Activated B cell treated with CpG ODN at 0.5 μM for 24 hours (primary cell): ENCODE measurements at regions of chr2 and their contacts with region 1.

Region 1: GRCh38 chr2:177332041-177332991 is 60.3 kb upstream of the AGPS start:
- DNase-seq: no peak
- ATAC-seq: peak; percentile 94
- H3K4me3 Mint-ChIP-seq: peak overlapping the region; percentile 46
- H3K27ac Mint-ChIP-seq: peak overlapping the region; percentile 50
- H3K4me1 Mint-ChIP-seq: peaks cover 9% of the 10 kb centered on the region
- H3K27me3 Mint-ChIP-seq: no peaks in the 10 kb centered on the region
- CTCF ChIP-seq: no peak

Region 2: GRCh38 chr2:177212106-177212890 is 120.0 kb before region 1 on chr2 and contains the start of gene HNRNPA3:
- CTCF ChIA-PET with region 1: no interaction called
- POLR2A ChIA-PET with region 1: interaction called, 6 read pairs
- intact Hi-C with region 1: loop called (anchors 1 kb)
- DNase-seq: peak; percentile 100
- ATAC-seq: peak; percentile 86
- H3K4me3 Mint-ChIP-seq: peak within 1 kb of the TSS; percentile 95
- H3K27ac Mint-ChIP-seq: peak within 1 kb of the TSS; percentile 100
- H3K4me1 Mint-ChIP-seq: peaks cover 48% of the 10 kb centered on the region
- H3K27me3 Mint-ChIP-seq: no peaks in the 10 kb centered on the region
- CTCF ChIP-seq: no peak
- total RNA-seq, gene HNRNPA3: 254 and 275 TPM in 2 replicates

Region 3: DNA sequence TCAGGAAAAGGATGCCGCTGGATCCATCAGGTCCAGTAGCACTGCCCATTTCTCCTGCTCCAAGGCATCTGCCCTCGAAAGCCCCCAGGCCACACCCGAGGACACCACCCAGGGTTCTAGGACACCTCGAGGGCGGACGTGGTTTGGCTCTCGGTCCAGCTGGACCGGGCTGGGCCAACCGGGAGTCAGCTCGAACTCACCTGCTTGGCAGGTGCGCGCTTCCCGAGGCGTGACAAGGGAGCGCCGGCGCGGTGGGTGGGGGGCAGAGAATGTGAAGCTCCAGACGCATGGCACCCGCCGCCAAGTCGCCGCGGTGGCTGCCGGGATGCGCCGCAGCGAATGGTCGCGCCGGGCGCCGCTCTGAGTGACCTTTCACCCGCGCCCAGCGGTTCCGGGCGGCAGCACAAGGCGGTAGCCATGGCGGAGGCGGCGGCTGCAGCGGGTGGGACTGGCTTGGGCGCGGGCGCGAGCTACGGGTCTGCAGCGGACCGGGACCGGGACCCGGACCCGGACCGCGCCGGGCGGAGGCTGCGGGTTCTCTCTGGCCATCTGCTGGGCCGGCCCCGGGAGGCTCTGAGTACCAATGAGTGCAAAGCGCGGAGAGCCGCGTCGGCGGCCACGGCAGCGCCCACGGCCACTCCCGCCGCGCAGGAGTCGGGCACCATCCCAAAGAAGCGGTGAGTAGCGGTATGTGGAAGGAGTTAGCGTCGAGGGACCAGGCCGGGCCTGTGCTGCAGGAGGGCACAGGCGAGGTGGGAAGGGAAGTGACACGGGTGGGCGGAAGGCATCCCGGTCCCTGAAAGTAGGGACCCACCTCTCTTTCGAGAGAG is 60.3 kb after region 1 on chr2 and contains the start of gene AGPS:
- CTCF ChIA-PET with region 1: interaction called, 19 read pairs
- POLR2A ChIA-PET with region 1: interaction called, 5 read pairs
- intact Hi-C with region 1: no loop called
- DNase-seq: peak; percentile 66
- ATAC-seq: peak; percentile 93
- H3K4me3 Mint-ChIP-seq: peak within 1 kb of the TSS; percentile 92
- H3K27ac Mint-ChIP-seq: peak within 1 kb of the TSS; percentile 69
- H3K4me1 Mint-ChIP-seq: peaks cover 42% of the 10 kb centered on the region
- H3K27me3 Mint-ChIP-seq: no peaks in the 10 kb centered on the region
- CTCF ChIP-seq: no peak
- total RNA-seq, gene AGPS: 29.0 and 29.9 TPM in 2 replicates

Region 4: DNA sequence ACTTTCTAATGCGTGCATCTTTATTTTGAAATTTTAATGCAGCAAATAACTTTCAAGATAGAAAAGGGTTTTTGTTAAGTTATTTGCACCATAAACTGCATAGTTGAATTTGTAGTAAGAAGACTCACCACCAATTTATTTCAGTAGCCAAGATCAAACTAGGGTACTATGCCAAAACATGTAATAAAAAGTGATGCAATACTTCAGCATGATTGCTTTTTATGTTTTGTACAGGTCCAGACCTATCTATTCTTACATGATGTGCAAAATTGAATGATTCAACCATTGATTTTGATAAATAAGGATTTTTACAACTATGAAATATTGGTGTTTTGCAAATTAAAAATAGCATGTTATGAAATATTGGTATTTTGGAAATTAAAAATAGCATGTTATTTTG is 87.0 kb after region 1 on chr2:
- CTCF ChIA-PET with region 1: interaction called, 76 read pairs
- POLR2A ChIA-PET with region 1: no interaction called
- intact Hi-C with region 1: loop called (anchors 1 kb)
- DNase-seq: no peak
- ATAC-seq: no peak
- H3K4me3 Mint-ChIP-seq: no peak overlapping the region
- H3K27ac Mint-ChIP-seq: no peak overlapping the region
- H3K4me1 Mint-ChIP-seq: peaks cover 5% of the 10 kb centered on the region
- H3K27me3 Mint-ChIP-seq: no peaks in the 10 kb centered on the region
- CTCF ChIP-seq: no peak

Region 5: GRCh38 chr2:177604271-177605065 is 272.2 kb after region 1 on chr2:
- CTCF ChIA-PET with region 1: interaction called, 19 read pairs
- POLR2A ChIA-PET with region 1: no interaction called
- intact Hi-C with region 1: loop called (anchors 1 kb)
- DNase-seq: no peak
- ATAC-seq: no peak
- H3K4me3 Mint-ChIP-seq: no peak overlapping the region
- H3K27ac Mint-ChIP-seq: no peak overlapping the region
- H3K4me1 Mint-ChIP-seq: no peaks in the 10 kb centered on the region
- H3K27me3 Mint-ChIP-seq: no peaks in the 10 kb centered on the region
- CTCF ChIP-seq: no peak

Region 6: DNA sequence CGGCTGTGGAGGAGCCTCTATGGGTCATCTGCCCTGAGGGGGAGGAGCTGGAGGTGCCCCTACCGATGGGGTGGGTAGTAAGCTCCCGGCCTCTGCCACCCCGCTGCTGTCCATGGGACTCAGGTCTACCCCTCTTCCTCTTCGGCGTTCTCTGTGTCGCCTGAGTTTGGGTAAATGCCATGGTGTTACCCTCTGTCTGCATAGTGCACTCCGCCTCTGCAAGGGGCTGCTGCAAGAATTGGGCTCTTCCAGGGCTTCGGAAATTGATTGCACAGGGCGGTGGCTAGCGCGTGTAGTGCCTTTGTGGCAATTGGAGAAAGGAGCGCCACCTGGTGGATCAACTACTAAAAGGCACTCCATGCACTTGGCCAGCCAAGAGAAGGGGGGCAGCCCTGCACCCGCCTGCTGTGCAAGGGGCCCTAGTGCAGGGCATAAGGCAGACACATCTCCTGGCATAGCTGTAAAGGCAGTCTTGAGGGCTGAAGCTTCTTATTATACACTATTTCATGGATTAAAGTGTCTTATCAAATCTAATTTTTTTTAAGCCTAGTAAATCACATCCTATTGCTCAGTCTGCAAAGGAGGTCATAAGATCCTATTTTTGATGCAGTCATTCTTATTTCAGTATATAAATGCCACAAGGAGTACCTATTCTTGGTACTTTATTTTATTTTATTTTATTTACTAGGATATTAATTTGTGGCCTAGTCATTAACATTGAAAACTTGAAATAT is 431.4 kb after region 1 on chr2:
- CTCF ChIA-PET with region 1: interaction called, 48 read pairs
- POLR2A ChIA-PET with region 1: no interaction called
- intact Hi-C with region 1: loop called (anchors 1 kb)
- DNase-seq: peak; percentile 54
- ATAC-seq: peak; percentile 94
- H3K4me3 Mint-ChIP-seq: peak overlapping the region; percentile 64
- H3K27ac Mint-ChIP-seq: no peak overlapping the region
- H3K4me1 Mint-ChIP-seq: peaks cover 10% of the 10 kb centered on the region
- H3K27me3 Mint-ChIP-seq: peaks cover 21% of the 10 kb centered on the region
- CTCF ChIP-seq: peak; percentile 58